ENCODE measurements at regions of chr21 and their contacts with region 1.

Region 1: DNA sequence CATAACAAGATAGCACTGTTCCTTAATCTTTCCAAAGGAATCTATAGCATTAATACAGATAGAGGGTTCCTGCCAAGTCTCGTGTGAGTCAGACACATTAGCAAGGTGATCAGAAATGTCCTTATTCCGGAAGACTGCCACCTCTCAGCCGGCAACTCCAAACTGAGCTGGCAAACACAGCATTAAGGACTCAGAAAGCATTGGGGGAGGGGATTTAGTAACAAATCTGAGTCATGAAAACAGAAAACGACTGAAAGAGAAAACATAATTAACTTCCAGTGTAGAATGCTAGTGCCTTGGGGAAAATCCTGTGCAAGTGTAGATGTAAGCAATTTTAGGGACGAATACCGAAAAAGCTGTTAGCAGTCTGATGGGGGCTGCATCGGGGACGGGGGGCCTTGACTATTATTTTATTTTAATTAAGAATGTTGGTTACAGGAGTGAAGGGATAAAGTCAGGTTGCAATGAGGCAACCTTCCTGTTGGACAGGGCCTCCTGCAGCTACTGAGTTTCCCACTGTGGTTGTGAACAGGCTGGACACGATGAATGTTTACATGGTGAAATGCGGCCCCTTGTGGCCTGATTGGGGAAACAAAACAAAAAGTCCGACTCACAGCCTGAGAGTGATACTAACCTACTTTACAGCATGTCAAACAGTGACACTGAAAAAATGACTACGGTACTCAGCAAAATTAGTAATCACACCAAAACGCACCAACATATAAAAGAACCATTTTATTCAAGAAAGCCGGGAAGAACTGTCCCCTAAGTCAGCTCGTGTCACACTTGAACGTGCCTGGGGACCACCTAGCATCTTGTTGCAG is 20.7 kb downstream of the MIS18A start:
- DNase-seq: peak; percentile 57
- ATAC-seq: peak; percentile 81 to 87
- H3K4me3 ChIP-seq: no peak overlapping the region
- H3K27ac ChIP-seq: no peak overlapping the region
- H3K4me1 ChIP-seq: peaks cover 10% of the 10 kb centered on the region
- H3K27me3 ChIP-seq: no peaks in the 10 kb centered on the region
- CTCF ChIP-seq: peak; percentile 62

Region 2: GRCh38 chr21:31866077-31866511 is 392.1 kb before region 1 on chr21:
- intact Hi-C with region 1: loop called (anchors 10 kb)
- DNase-seq: peak; percentile 92
- ATAC-seq: peak; percentile 91 to 92
- H3K4me3 ChIP-seq: no peak overlapping the region
- H3K27ac ChIP-seq: no peak overlapping the region
- H3K4me1 ChIP-seq: no peaks in the 10 kb centered on the region
- H3K27me3 ChIP-seq: peaks cover 15% of the 10 kb centered on the region
- CTCF ChIP-seq: peak; percentile 93

Region 3: GRCh38 chr21:32448803-32449594 is 190.8 kb after region 1 on chr21:
- intact Hi-C with region 1: no loop called
- DNase-seq: no peak
- ATAC-seq: no peak
- H3K4me3 ChIP-seq: no peak overlapping the region
- H3K27ac ChIP-seq: no peak overlapping the region
- H3K4me1 ChIP-seq: peaks cover 27% of the 10 kb centered on the region
- H3K27me3 ChIP-seq: no peaks in the 10 kb centered on the region
- CTCF ChIP-seq: no peak

Measured in lower lobe of right lung (tissue), 2 donors.